Activated T-helper 1 cell treated with anti-CD3 and anti-CD28 coated beads, Interleukin-12 subunit alpha, Interleukin-12 subunit beta, Interleukin-2, Interleukin-4 antibody, amounts not matched to agents 30 ng/mL and 10 ng/mL and 1 ng/mL, durations not matched to agents 14 hours and 24 hours and 36 hours (primary cell): ENCODE measurements at regions of chr2 and their contacts with region 1.

Region 1: GRCh38 chr2:231780909-231781797 is at the start of gene PDE6D:
- DNase-seq: peak; percentile 98
- H3K4me3 Mint-ChIP-seq: peak within 1 kb of the TSS; percentile 93
- H3K27ac Mint-ChIP-seq: peak within 1 kb of the TSS; percentile 94
- H3K4me1 Mint-ChIP-seq: peaks cover 56% of the 10 kb centered on the region
- H3K27me3 Mint-ChIP-seq: no peaks in the 10 kb centered on the region
- total RNA-seq, gene PDE6D: 31.0 and 31.9 TPM in 2 replicates

Region 2: GRCh38 chr2:229921892-229922445 is 1859.2 kb before region 1 on chr2 and contains the start of gene TRIP12:
- intact Hi-C with region 1: loop called (anchors 2 kb)
- DNase-seq: peak; percentile 83
- H3K4me3 Mint-ChIP-seq: peak within 1 kb of the TSS; percentile 97
- H3K27ac Mint-ChIP-seq: peak within 1 kb of the TSS; percentile 96
- H3K4me1 Mint-ChIP-seq: peaks cover 40% of the 10 kb centered on the region
- H3K27me3 Mint-ChIP-seq: no peaks in the 10 kb centered on the region
- total RNA-seq, gene TRIP12: 244 and 253 TPM in 2 replicates

Region 3: GRCh38 chr2:231056453-231057424 is 724.4 kb before region 1 on chr2 and contains the start of gene PSMD1:
- intact Hi-C with region 1: loop called (anchors 1 kb)
- DNase-seq: peak; percentile 89
- H3K4me3 Mint-ChIP-seq: peak within 1 kb of the TSS; percentile 98
- H3K27ac Mint-ChIP-seq: peak within 1 kb of the TSS; percentile 100
- H3K4me1 Mint-ChIP-seq: peaks cover 52% of the 10 kb centered on the region
- H3K27me3 Mint-ChIP-seq: no peaks in the 10 kb centered on the region
- total RNA-seq, gene PSMD1: 172 and 181 TPM in 2 replicates

Region 4: DNA sequence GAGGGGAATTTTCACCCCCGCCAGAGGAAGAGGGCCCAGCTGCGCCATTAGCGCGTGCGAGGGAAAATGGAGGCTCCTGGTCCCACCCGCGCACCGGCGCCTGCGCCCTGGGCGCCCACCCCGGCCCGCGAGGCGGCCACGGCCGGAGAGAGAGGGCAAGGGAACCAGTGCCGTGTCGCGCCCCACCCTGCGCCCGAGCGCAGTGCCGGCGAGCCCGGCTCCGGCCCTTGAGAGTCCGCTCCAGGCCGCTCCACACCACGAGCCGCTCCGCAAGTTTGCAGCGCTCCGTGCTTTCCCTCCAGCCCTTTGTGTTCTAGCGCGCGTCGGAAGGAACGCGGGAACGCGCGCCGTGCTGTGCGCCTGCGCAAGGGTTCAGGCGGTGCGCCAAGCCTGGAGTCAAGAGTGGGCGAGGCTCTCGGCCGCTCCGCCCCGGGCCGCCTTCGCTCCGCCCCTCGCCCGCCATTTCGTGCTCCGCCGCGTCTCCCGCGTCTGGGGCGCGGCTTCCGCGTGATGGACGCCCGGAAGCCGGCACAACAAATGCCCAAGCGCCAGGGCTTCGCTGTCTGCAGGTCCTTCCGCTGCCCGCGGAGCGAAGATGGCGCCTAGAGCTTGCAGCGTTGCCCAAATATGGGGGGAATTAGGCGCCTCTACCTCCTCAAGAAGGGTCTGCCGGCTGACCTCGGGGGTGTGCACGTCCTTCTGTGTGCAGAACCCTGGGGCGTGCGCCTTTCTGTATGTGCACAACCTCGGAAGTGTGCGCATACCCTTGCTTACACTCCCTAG is 118.9 kb before region 1 on chr2:
- intact Hi-C with region 1: loop called (anchors 1 kb)
- DNase-seq: peak; percentile 98
- H3K4me3 Mint-ChIP-seq: peak overlapping the region; percentile 74
- H3K27ac Mint-ChIP-seq: peak overlapping the region; percentile 96
- H3K4me1 Mint-ChIP-seq: peaks cover 25% of the 10 kb centered on the region
- H3K27me3 Mint-ChIP-seq: no peaks in the 10 kb centered on the region

Region 5: GRCh38 chr2:231674587-231675338 is 106.4 kb before region 1 on chr2:
- intact Hi-C with region 1: loop called (anchors 2 kb)
- DNase-seq: peak; percentile 55
- H3K4me3 Mint-ChIP-seq: peak overlapping the region; percentile 15
- H3K27ac Mint-ChIP-seq: peak overlapping the region; percentile 26
- H3K4me1 Mint-ChIP-seq: peaks cover 22% of the 10 kb centered on the region
- H3K27me3 Mint-ChIP-seq: no peaks in the 10 kb centered on the region

Region 6: DNA sequence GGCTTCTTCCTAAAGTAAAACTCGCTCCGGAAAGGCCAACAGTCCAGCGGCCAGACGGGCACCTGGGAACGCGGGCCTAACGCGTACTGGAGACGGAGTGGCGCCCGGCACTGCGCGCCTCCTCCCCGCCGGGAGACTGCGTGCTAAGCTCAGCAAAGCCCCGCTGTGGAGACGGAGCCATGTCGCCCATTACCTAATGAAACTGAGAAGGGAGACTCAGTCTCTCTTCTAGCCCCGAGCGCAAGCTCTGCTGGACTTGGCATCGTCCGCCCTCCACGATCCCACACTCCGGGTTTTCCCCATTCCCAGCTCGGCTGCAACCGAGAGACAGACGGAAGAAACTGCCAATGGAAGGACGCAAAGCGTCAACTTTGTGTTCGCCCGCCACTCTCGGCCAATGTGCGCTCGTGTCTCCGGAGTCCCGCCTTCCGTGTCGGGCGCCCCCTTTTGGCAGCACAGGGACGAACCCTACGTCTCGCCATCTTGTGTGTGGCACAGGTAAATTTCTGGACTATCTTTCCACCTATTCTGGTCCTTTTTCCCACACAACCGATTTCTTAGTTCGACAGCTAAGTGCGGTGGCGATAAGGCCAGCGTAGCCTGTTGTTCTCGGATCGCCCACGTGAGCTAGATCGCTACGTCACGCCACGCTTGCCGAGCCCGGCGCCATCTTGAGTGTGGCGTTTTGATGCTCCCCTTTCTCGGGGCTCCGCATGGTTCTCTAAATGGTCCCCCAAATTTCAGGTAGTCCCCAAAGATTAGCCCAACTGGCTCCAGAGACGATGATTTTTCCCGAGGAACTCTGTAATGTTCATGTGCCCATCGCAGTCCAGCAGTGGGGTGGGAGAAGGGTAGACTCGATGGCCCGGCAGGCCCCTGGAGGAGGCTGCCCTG is 74.2 kb before region 1 on chr2:
- intact Hi-C with region 1: loop called (anchors 1 kb)
- DNase-seq: peak; percentile 96
- H3K4me3 Mint-ChIP-seq: peak overlapping the region; percentile 99
- H3K27ac Mint-ChIP-seq: peak overlapping the region; percentile 100
- H3K4me1 Mint-ChIP-seq: peaks cover 13% of the 10 kb centered on the region
- H3K27me3 Mint-ChIP-seq: peaks cover 3% of the 10 kb centered on the region

Region 7: DNA sequence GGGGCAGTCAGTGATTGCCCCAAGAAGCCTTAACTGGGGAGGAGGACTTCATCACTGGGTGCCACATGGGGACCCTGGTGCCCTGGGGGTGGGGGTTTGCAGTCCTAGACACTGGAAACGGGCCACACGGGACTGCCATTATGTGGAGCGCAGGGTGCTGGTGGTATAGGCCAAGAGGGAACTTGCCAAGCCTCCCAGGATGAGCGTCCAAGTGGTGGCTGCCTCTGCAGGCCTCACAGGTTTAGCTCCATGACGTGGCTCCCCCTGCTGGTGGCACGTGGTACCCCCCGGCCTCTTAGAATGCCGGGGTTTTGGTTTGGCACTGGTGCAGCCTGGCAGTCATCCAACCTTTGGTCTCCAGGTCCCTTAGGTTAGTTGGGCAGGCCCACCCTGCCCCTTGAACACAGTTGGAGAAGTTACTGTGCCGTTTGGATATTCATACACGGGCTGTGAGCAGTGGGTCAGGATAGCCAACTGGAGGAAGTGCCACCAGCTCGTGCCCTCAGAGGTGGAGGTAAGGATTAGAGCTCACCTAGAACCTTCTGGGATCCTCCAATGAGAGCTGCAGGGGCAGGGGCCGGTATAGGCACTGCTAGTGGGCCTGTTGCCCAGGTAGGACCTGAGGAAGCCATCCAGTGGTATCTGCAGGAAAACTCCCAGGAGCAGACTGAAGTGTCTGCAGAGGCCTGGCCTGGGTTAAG is 67.3 kb before region 1 on chr2:
- intact Hi-C with region 1: loop called (anchors 1 kb)
- DNase-seq: peak; percentile 78
- H3K4me3 Mint-ChIP-seq: peak overlapping the region; percentile 75
- H3K27ac Mint-ChIP-seq: peak overlapping the region; percentile 93
- H3K4me1 Mint-ChIP-seq: peaks cover 26% of the 10 kb centered on the region
- H3K27me3 Mint-ChIP-seq: no peaks in the 10 kb centered on the region

Region 8: DNA sequence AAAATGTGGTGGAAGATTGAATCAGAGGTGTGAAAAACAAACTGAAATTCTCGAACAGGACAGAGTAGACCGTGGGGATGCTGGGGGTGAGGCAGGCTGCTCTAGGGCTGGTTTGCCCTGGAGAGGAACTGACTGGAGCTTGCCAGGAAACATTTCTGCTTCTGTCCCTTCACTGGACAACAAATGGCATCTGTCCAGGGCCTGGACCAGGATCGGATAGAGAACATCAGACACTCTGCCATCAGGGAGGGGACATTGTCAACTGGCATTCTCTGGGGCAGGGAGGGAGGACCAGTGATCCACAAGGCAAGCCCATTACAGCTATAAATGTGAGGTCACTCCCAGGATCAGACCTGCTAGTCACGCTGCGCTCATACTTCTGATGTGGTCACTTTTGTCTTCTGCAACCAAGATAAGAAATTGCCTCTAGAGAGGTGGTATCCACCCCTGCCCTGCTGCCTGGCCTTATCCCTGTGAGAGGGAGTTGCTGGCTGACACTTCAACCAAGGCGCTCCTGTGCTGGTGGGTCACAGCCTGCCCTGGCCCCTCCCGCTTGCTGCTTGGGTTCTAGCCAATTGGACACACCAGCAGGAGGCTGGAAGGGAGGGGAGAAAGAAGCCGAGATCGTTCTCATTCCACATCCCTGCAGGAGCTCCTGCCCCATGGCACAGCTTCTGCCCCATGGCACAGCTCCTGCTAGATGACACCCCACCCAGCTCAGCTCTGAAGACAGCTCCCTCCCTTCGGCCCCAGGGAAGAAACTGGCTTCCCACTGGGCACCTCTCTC is 136.3 kb after region 1 on chr2:
- intact Hi-C with region 1: no loop called
- DNase-seq: no peak
- H3K4me3 Mint-ChIP-seq: no peak overlapping the region
- H3K27ac Mint-ChIP-seq: no peak overlapping the region
- H3K4me1 Mint-ChIP-seq: no peaks in the 10 kb centered on the region
- H3K27me3 Mint-ChIP-seq: peaks cover 4% of the 10 kb centered on the region